ENCODE measurements at regions of chr19 and their contacts with region 1.

Region 1: DNA sequence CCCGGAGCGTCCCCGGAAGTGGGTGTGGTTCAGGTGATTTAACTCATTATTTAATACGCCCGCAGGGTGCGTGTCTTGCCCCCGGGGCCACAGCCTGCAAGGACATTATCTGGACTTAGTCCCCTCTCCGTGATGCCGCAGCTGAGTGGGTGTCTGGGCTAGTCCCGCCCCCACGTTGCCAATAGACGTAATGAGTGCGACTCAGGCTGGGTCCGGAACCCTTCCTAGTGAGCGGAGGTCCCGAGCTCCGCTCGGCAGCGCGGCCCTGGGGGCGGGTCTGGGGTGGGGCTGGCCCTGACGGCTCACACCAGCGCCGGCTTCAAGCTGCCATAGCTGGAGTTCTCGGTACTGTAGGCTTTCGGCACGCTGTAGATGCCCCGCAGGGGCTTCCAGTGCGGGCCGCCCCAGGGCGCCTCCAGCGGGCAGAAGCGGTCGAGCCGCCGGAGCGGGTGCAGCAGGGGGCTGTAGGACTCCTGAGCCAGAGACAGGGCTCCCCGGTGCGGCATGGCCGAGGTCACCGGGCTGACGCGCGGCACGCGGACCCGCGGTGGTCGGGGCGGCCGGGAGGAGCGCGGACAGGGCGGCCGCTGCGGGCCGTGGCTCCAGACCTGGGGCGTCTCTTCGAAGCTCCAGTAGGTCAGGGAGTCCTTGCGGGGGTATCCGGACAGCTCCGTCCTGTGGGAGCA is 918 bp upstream of the LHB start:
- DNase-seq: peak; percentile 54 to 80 (median 65)
- H3K4me3 ChIP-seq: peak overlapping the region; percentile 61
- H3K4me3 Mint-ChIP-seq: peak overlapping the region; percentile 77 to 94 (median 89)
- H3K27ac ChIP-seq: no peak overlapping the region
- H3K27ac Mint-ChIP-seq: peak overlapping the region in 7 of 8 donors; percentile 17 to 92 (median 68)
- H3K4me1 ChIP-seq: peaks cover 6% of the 10 kb centered on the region
- H3K4me1 Mint-ChIP-seq: peaks cover 21 to 42% (median 23%) of the 10 kb centered on the region in 3 donors
- H3K27me3 ChIP-seq: no peaks in the 10 kb centered on the region
- H3K27me3 Mint-ChIP-seq: no peaks in the 10 kb centered on the region

Region 2: DNA sequence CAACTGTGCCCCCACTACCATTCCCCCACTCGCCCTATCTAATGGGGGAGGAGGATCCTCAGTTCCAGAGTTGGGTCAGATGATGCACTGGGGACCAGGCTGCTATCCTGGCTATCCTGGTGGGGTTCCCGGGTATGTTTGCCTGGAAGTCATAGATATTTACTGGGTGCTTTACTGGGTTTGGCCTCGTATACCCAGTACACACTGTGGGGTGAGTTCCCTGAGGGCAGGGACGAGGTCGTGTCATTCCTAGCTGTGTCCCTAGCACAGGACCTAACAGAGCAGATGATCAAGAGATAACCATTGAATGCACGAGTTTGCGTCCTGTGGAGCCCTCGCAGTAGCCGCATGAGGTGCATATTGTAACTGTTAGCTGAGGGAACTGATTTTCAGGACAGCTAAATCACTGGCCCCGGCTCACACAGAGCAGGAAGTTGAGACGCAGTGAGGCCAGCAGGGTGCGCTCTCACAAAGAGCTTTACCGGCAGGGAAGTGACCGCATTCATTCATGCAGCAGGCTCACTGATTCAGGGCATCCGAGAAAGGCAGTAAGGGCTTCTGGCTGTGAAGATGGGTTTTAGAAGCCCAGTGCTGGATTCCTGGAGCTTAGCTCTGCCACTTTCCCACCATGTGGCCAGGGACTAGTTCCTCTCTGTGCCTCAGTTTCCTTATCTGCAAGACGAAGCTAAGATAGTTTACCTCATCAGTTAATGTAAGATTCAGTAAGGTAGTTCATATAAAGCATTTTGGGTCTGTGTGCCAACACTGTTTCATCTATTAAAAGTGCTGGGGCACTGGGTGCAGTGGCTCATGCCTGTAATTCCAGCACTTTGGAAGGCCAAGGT is 18.1 kb before region 1 on chr19:
- CTCF ChIA-PET with region 1: interaction called, 11 read pairs
- POLR2A ChIA-PET with region 1: no interaction called
- DNase-seq: peak; percentile 44 to 72 (median 45)
- H3K4me3 ChIP-seq: no peak overlapping the region
- H3K4me3 Mint-ChIP-seq: peak overlapping the region in 1 of 7 donors; percentile 3
- H3K27ac ChIP-seq: no peak overlapping the region
- H3K27ac Mint-ChIP-seq: peak overlapping the region in 2 of 8 donors; percentile 54 to 77
- H3K4me1 ChIP-seq: peaks cover 5% of the 10 kb centered on the region
- H3K4me1 Mint-ChIP-seq: peaks cover 10 to 24% (median 14%) of the 10 kb centered on the region in 3 donors
- H3K27me3 ChIP-seq: no peaks in the 10 kb centered on the region
- H3K27me3 Mint-ChIP-seq: no peaks in the 10 kb centered on the region

Region 3: GRCh38 chr19:49624967-49625910 is 607.4 kb after region 1 on chr19:
- CTCF ChIA-PET with region 1: no interaction called
- POLR2A ChIA-PET with region 1: no interaction called
- DNase-seq: no peak
- H3K4me3 ChIP-seq: no peak overlapping the region
- H3K4me3 Mint-ChIP-seq: no peak overlapping the region
- H3K27ac ChIP-seq: no peak overlapping the region
- H3K27ac Mint-ChIP-seq: peak overlapping the region in 2 of 8 donors; percentile 26 to 68
- H3K4me1 ChIP-seq: no peaks in the 10 kb centered on the region
- H3K4me1 Mint-ChIP-seq: no peaks in the 10 kb centered on the region
- H3K27me3 ChIP-seq: no peaks in the 10 kb centered on the region
- H3K27me3 Mint-ChIP-seq: no peaks in the 10 kb centered on the region